ENCODE measurements at regions of chr19 and their contacts with region 1.

Region 1: GRCh38 chr19:54102421-54103169 is at the start of gene NDUFA3:
- DNase-seq: peak; percentile 100
- ATAC-seq: peak; percentile 98
- H3K4me3 ChIP-seq: peak within 1 kb of the TSS; percentile 83
- H3K27ac ChIP-seq: no peak within 1 kb of the TSS
- H3K4me1 ChIP-seq: peaks cover 4% of the 10 kb centered on the region; the same call in 1 of the 2 replicates
- H3K27me3 ChIP-seq: no peaks in the 10 kb centered on the region
- CTCF ChIP-seq: no peak
- total RNA-seq, gene NDUFA3: 91.6 and 138 TPM in 2 replicates

Region 2: DNA sequence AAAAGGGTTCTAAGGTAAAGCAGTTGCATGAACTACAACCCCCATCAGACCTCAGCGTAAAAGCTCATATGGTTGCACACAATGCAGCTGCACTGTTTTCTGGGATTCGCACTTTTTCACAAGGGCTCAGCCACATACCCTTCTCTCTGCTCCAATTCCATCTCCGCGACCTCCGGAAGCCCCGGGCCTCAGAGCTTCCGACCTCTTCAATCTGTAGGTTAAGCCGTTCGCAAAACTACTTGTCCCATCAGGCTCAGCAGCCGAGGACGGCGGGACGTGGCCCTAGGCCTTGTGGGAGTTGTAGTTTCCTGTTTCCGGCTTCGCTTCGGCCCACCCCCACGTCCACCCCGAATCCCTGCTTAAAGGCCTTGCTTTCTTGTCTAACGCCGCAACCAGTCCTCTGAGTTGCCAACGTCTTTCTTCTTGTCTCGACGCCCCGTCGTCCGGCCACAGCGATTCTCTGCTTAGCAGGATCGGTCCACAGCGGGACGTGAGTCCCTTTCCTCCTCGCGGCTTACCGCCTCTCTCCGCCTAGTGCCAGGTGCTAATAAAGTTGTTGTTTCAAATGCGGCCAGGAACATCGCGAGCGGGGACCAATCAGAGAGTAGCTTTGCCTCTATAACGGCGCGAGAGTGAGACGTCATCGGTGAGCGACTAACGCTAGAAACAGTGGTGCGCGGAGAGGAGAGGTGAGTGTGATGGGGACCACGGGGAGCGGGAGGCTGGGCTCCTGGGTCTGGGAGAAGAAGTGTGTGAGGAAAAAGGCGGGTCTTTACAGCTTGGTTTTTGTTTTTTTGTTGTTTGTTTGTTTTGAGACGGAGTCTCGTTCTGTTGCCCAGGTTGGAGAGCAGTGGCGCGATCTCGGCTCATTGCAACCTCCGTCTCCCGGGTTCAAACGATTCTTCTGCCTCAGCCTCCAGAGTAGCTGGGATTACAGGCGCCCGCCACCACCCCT is 12.8 kb after region 1 on chr19 and contains the starts of genes PRPF31 and TFPT:
- CTCF ChIA-PET with region 1: no interaction called
- POLR2A ChIA-PET with region 1: no interaction called
- intact Hi-C with region 1: loop called (anchors 1 kb)
- DNase-seq: peak; percentile 99
- ATAC-seq: peak; percentile 92
- H3K4me3 ChIP-seq: peak within 1 kb of the TSS; percentile 74
- H3K27ac ChIP-seq: peak within 1 kb of the TSS; percentile 19; the same call in 1 of the 2 replicates
- H3K4me1 ChIP-seq: peaks cover 10% of the 10 kb centered on the region
- H3K27me3 ChIP-seq: no peaks in the 10 kb centered on the region
- CTCF ChIP-seq: no peak
- total RNA-seq, gene PRPF31: 170 and 196 TPM in 2 replicates
- total RNA-seq, gene TFPT: 55.4 and 74.2 TPM in 2 replicates

Measured in PC-3 (cell line).